ENCODE measurements at regions of chr9 and their contacts with region 1.

Region 1: GRCh38 chr9:129177791-129178559 is at the start of gene IER5L:
- DNase-seq: peak; percentile 94
- ATAC-seq: peak; percentile 80 to 91 (median 84)
- H3K4me3 ChIP-seq: peak within 1 kb of the TSS; percentile 72 to 100 (median 96)
- H3K27ac ChIP-seq: peak within 1 kb of the TSS; percentile 96 to 100 (median 98)
- H3K4me1 ChIP-seq: peaks cover 11 to 40% (median 29%) of the 10 kb centered on the region in 9 donors
- H3K27me3 ChIP-seq: peaks cover 0 to 6% (median 0%) of the 10 kb centered on the region in 7 donors
- CTCF ChIP-seq: peak in 3 of 9 donors; percentile 7 to 11 (median 10)
- total RNA-seq, gene IER5L: 1.2 to 13.7 (median 5.6) TPM

Region 2: GRCh38 chr9:128764361-128764760 is 413.6 kb before region 1 on chr9:
- intact Hi-C with region 1: no loop called
- DNase-seq: no peak
- ATAC-seq: no peak
- H3K4me3 ChIP-seq: no peak overlapping the region
- H3K27ac ChIP-seq: no peak overlapping the region
- H3K4me1 ChIP-seq: peaks cover 0 to 14% (median 6%) of the 10 kb centered on the region in 9 donors
- H3K27me3 ChIP-seq: no peaks in the 10 kb centered on the region
- CTCF ChIP-seq: no peak

Region 3: DNA sequence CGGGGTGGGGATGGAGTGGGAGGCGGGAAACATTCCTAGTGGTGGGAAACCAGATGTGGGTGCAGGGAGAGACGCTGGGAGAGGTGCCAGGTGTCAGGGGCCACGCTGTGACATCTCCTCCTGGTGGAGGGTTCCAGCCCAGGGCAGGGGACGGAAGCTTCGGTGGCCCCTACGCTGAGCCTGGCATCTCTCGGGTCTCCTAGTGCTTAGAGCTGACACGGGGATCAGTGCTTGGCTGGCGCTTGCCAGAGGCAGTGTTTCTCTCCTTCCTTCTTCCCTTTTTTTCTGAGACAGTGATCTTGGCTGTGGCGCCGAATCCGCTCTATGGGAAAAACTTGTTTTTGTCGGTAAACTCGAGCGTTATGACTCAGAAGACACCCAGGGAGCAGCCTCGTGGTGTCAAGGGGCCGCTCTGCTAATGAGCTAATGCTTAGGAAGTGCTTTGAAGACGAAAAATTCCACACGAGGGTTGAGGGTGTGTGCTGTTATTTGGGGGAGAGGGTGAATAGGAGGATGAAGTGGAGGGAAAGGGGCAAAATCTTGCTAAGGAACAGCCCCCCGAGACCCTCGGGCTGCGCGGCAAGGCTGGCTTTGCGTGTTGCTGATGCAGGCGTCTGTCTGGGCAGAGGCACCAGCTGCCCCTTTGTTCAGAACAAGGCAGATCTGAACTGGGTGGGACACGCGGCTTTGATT is 20.5 kb after region 1 on chr9:
- intact Hi-C with region 1: loop called in 1 of 10 experiments (anchors 1 kb)
- DNase-seq: peak; percentile 54 to 67
- ATAC-seq: peak in 7 of 8 donors; percentile 30 to 70 (median 52)
- H3K4me3 ChIP-seq: peak overlapping the region in 2 of 10 donors; percentile 12 to 14
- H3K27ac ChIP-seq: peak overlapping the region; percentile 63 to 87 (median 78)
- H3K4me1 ChIP-seq: peaks cover 0 to 24% (median 9%) of the 10 kb centered on the region in 9 donors
- H3K27me3 ChIP-seq: peaks cover 0 to 20% (median 9%) of the 10 kb centered on the region in 7 donors
- CTCF ChIP-seq: peak in 2 of 9 donors; percentile 8 to 11

Region 4: DNA sequence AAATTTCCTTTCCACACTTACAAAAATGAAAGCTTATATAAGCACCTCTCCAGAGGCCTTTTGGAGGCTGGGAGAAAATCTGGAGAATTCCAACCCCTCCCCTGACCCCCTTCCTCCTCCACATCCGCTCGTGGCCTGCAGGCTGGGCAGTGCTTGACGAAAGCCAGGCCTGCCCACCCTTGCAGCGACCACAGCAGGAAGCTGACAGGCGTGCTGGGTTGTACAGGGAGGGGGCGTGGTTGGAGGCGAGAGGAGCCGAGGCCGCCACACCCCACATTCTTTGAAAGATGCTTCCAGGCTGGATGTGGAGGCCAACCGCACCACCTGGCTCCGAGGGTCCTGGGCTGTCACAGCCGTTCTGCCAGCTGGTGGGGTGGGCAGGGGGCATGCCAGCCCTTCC is 47.8 kb after region 1 on chr9:
- intact Hi-C with region 1: no loop called
- DNase-seq: peak; percentile 75 to 90
- ATAC-seq: peak; percentile 84 to 97 (median 94)
- H3K4me3 ChIP-seq: no peak overlapping the region
- H3K27ac ChIP-seq: peak overlapping the region; percentile 4 to 91 (median 75)
- H3K4me1 ChIP-seq: peaks cover 0 to 28% (median 14%) of the 10 kb centered on the region in 9 donors
- H3K27me3 ChIP-seq: no peaks in the 10 kb centered on the region
- CTCF ChIP-seq: peak in 1 of 9 donors; percentile 24

Region 5: GRCh38 chr9:129320575-129321263 is 142.7 kb after region 1 on chr9:
- intact Hi-C with region 1: loop called in 4 of 10 experiments (anchors 1 to 10 kb)
- DNase-seq: peak; percentile 68 to 74
- ATAC-seq: peak; percentile 76 to 85 (median 83)
- H3K4me3 ChIP-seq: peak overlapping the region; percentile 3 to 63 (median 51)
- H3K27ac ChIP-seq: peak overlapping the region; percentile 85 to 95 (median 90)
- H3K4me1 ChIP-seq: peaks cover 29 to 85% (median 61%) of the 10 kb centered on the region in 9 donors
- H3K27me3 ChIP-seq: no peaks in the 10 kb centered on the region
- CTCF ChIP-seq: peak in 8 of 9 donors; percentile 6 to 47 (median 38)

Region 6: GRCh38 chr9:129383561-129384416 is 205.8 kb after region 1 on chr9:
- intact Hi-C with region 1: loop called in 2 of 10 experiments (anchors 1 to 10 kb)
- DNase-seq: peak; percentile 87 to 88
- ATAC-seq: peak; percentile 87 to 94 (median 89)
- H3K4me3 ChIP-seq: peak overlapping the region; percentile 16 to 75 (median 60)
- H3K27ac ChIP-seq: peak overlapping the region; percentile 90 to 99 (median 96)
- H3K4me1 ChIP-seq: peaks cover 6 to 22% (median 17%) of the 10 kb centered on the region in 9 donors
- H3K27me3 ChIP-seq: no peaks in the 10 kb centered on the region
- CTCF ChIP-seq: peak in 6 of 9 donors; percentile 12 to 55 (median 36)

Region 7: DNA sequence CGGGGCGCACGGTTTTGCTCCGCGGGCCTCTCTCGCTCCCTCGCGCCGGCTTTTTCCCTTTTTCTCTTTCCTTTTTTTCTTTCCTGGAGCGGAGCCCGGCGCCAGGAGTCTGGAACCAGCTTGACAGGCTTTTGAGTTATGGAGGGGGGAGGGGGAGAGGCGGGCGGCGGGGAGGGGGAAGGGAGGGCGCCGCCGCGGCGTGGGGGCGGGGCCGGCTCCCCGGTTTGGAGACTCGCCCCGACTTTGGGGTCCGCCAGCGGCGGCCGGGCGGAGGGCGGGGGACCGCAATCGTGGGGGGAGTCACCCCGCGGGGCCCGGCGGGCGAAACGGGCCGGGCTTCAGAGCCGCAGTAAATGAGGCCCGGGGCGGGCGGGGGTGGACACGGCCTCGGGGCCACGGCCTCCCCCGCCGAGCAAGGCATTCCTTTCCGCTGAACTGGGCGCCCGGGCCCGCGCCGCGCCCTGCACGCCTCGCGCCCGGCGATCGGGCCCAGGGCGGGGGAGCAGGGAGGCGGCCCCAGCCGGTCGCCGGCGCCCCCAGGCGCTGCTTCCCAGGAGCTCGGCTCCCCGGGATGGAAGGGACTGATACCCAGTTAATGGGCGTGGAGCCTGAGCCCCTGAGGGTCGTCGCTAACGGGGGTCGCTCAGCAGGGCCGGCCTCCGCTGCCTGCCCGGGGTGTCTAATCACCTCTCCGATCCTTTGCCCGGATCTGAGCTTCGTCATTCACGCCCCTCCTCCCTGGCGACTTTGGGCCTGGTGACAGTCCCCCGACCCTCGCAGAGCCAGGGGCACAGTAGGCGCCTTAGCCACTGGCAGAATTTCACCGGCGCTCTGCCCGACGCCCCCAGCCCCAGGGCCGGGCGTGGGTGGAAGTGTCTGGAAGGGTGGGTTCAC is 304.8 kb after region 1 on chr9:
- intact Hi-C with region 1: loop called in 4 of 10 experiments (anchors 2 to 5 kb)
- DNase-seq: peak; percentile 84 to 93
- ATAC-seq: peak; percentile 49 to 83 (median 64)
- H3K4me3 ChIP-seq: peak overlapping the region; percentile 34 to 71 (median 62)
- H3K27ac ChIP-seq: peak overlapping the region; percentile 98 to 100 (median 100)
- H3K4me1 ChIP-seq: peaks cover 37 to 87% (median 64%) of the 10 kb centered on the region in 9 donors
- H3K27me3 ChIP-seq: no peaks in the 10 kb centered on the region
- CTCF ChIP-seq: peak in 3 of 9 donors; percentile 13 to 42 (median 29)